Aorta (tissue), 5 donors: ENCODE measurements at regions of chr7 and their contacts with region 1.

Region 1: GRCh38 chr7:77657427-77658224 is 38.6 kb upstream of the RSBN1L start:
- DNase-seq: no peak
- ATAC-seq: no peak
- H3K4me3 ChIP-seq: no peak overlapping the region
- H3K27ac ChIP-seq: no peak overlapping the region
- H3K4me1 ChIP-seq: no peaks in the 10 kb centered on the region
- H3K27me3 ChIP-seq: no peaks in the 10 kb centered on the region

Region 2: DNA sequence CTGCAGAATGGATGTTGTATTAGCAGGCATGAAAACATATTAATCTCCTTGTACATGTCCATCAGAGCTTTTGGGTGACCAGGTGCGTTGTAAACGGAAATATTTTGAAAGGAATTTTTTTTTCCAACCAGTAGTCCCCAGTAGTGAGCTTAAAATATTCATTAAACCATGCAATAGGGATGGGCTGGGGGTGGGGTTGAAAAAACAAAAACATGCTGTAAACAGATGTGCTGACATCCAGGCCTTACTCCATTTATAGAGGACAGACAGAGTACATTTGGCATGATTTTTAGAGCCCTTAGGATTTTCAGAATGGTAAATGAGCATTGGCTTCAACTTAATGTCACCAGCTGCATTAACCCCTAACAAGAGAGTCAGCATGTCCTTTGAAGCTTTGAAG is 70.4 kb before region 1 on chr7:
- intact Hi-C with region 1: no loop called
- DNase-seq: no peak
- ATAC-seq: no peak
- H3K4me3 ChIP-seq: no peak overlapping the region
- H3K27ac ChIP-seq: no peak overlapping the region
- H3K4me1 ChIP-seq: no peaks in the 10 kb centered on the region
- H3K27me3 ChIP-seq: no peaks in the 10 kb centered on the region

Region 3: GRCh38 chr7:77940647-77941046 is 283.0 kb after region 1 on chr7:
- intact Hi-C with region 1: loop called in 1 of 2 experiments (anchors 10 kb)
- DNase-seq: no peak
- ATAC-seq: no peak
- H3K4me3 ChIP-seq: no peak overlapping the region
- H3K27ac ChIP-seq: no peak overlapping the region
- H3K4me1 ChIP-seq: no peaks in the 10 kb centered on the region
- H3K27me3 ChIP-seq: no peaks in the 10 kb centered on the region